Transverse colon (tissue), 4 donors: ENCODE measurements at regions of chr17 and their contacts with region 1.

Region 1: DNA sequence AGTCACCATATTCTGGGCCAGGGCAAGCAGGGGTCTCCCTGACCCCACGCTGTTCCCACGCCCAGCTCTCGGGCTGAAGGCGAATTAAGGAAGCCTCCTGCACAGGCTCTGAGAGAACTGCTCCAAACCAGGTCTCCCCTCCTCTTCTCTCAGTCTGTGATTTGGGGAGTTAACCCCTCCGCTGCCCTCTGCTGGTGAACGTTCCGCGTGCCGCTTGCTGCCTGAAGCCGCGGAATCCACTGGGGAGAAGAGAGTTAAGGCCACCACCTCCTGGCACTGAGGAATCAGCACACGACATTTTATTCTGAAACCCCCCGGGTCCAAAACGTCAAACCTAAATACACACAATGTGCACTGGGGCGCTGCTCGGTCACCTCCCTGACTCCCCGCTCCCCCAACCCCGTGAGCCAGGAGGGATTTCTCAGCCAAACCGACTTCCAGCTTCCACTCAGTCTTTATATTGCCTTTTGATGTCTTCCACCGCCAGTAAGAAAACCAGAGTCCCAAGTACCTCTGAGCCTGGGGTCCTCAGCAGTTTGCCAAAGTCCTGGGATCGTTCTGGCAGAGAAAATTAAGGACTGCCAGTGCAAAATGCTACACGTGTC is 54.4 kb upstream of the RCVRN start:
- DNase-seq: peak; percentile 16
- H3K4me3 ChIP-seq: no peak overlapping the region
- H3K27ac ChIP-seq: no peak overlapping the region
- H3K4me1 ChIP-seq: no peaks in the 10 kb centered on the region
- H3K27me3 ChIP-seq: no peaks in the 10 kb centered on the region
- CTCF ChIP-seq: peak; percentile 13 to 31 (median 22)
- EP300 ChIP-seq: no peak
- POLR2A ChIP-seq: no peak

Region 2: DNA sequence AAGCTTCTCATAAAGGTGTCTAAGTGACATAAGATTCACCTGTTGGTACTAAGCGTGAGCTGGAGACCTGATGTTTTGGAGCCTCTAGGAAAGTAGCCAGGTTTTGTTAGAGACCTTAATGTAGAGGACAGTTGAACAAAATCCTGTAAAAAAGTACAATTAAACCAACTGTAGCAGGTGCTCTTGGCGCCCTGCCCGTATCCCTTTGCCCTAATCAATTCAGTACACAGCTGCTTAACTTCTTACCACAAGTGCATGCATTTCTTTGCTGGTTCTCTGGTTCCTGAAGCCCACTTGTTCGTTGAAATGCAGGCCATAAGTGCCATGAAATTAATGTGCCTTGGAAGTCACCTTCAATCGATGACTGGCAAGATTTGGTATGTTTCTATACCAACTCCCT is 109.3 kb before region 1 on chr17:
- in situ Hi-C with region 1: no loop called
- intact Hi-C with region 1: no loop called
- DNase-seq: no peak
- H3K4me3 ChIP-seq: no peak overlapping the region
- H3K27ac ChIP-seq: no peak overlapping the region
- H3K4me1 ChIP-seq: no peaks in the 10 kb centered on the region
- H3K27me3 ChIP-seq: no peaks in the 10 kb centered on the region
- CTCF ChIP-seq: no peak
- EP300 ChIP-seq: no peak
- POLR2A ChIP-seq: no peak

Region 3: GRCh38 chr17:9900784-9901183 is 58.7 kb before region 1 on chr17:
- in situ Hi-C with region 1: no loop called
- intact Hi-C with region 1: no loop called
- DNase-seq: no peak
- H3K4me3 ChIP-seq: no peak overlapping the region
- H3K27ac ChIP-seq: peak overlapping the region; percentile 19 to 76 (median 38)
- H3K4me1 ChIP-seq: peaks cover 0 to 3% (median 0%) of the 10 kb centered on the region in 4 donors
- H3K27me3 ChIP-seq: no peaks in the 10 kb centered on the region
- CTCF ChIP-seq: no peak
- EP300 ChIP-seq: no peak
- POLR2A ChIP-seq: no peak

Region 4: DNA sequence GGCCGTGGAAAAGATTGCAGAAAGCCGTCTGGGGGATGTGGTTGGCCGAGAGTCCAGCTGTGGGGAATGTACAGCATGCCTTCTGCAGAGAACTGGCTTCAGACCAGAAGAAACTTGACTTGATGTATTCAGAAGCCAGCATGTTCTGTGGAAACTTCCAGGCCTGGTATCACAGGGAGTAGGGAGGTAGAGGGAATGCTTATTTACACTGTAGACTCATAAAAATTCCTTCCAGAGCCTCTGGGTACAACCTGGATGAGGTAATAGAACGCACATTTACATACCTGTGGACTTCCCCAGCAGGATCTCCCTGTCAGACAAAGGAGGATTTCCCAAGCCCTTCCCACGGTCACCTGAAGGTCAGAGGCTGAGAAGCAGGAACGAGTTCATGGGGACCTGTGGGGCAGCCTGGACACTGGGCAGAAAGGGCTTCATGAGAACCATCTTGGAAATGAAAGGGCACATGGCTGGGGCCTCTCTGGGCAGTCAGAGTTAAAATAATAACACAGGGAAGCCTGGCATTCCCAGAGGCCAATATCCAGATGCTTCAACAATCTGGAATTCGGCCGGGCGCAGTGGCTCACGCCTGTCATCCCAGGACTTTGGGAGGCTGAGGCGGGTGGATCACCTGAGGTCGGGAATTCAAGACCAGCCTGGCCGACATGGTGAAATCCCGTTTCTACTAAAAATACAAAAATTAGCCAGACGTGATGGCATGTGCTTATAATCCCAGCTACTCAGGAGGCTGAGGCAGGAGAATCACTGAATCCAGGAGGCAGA is 250.9 kb after region 1 on chr17:
- in situ Hi-C with region 1: loop called in 1 of 4 experiments (anchors 25 kb)
- intact Hi-C with region 1: no loop called
- DNase-seq: peak; percentile 25
- H3K4me3 ChIP-seq: no peak overlapping the region
- H3K27ac ChIP-seq: peak overlapping the region in 3 of 4 donors; percentile 1 to 72 (median 60)
- H3K4me1 ChIP-seq: peaks cover 3 to 18% (median 9%) of the 10 kb centered on the region in 4 donors
- H3K27me3 ChIP-seq: no peaks in the 10 kb centered on the region
- CTCF ChIP-seq: no peak
- EP300 ChIP-seq: no peak
- POLR2A ChIP-seq: no peak